K562 (cell line): ENCODE measurements at regions of chr18 and their contacts with region 1.

Region 1: DNA sequence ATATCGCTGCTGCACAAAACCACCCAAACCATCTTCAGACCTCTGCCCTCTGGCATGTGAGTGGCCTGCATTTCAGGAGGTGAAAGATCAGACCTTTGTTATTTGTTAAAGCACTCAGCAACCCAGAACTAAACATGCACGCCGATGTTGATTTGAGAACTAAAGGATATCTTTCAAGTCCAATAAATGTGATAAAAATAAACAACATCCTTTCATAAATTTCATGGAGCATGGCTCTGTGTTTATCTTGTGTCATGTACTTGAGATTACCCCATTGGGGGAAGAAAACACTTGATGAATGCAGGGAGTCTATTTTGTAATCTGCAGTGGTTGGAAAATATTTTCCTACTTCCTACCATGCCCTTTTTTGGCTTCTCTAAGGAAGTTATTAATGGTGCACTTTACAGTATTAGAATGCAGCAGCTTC is 70.8 kb upstream of the GATA6 start:
- DNase-seq: no peak
- ATAC-seq: no peak
- H3K4me3 ChIP-seq: no peak overlapping the region
- H3K27ac ChIP-seq: no peak overlapping the region
- H3K4me1 ChIP-seq: peaks cover 7 to 27% of the 10 kb centered on the region in 2 experiments; a peak in 4 of 5 replicates
- H3K27me3 ChIP-seq: peaks cover 2 to 16% of the 10 kb centered on the region in 2 experiments; a peak in 3 of 5 replicates
- CTCF ChIP-seq: no peak
- EP300 ChIP-seq: no peak
- POLR2A ChIP-seq: no peak
- RAD21 ChIP-seq: no peak

Region 2: GRCh38 chr18:22018366-22018765 is 80.2 kb before region 1 on chr18:
- CTCF ChIA-PET with region 1: no interaction called
- POLR2A ChIA-PET with region 1: no interaction called
- in situ Hi-C with region 1: no loop called
- intact Hi-C with region 1: loop called (anchors 10 kb)
- DNase-seq: no peak
- ATAC-seq: no peak
- H3K4me3 ChIP-seq: no peak overlapping the region
- H3K27ac ChIP-seq: no peak overlapping the region
- H3K4me1 ChIP-seq: no peaks in the 10 kb centered on the region
- H3K27me3 ChIP-seq: peaks cover 12 to 17% of the 10 kb centered on the region in 2 experiments; a peak in 3 of 5 replicates
- CTCF ChIP-seq: no peak
- EP300 ChIP-seq: no peak
- POLR2A ChIP-seq: no peak
- RAD21 ChIP-seq: no peak

Region 3: GRCh38 chr18:22084547-22084946 is 14.0 kb before region 1 on chr18:
- CTCF ChIA-PET with region 1: no interaction called
- POLR2A ChIA-PET with region 1: interaction called, 12 read pairs
- in situ Hi-C with region 1: no loop called
- intact Hi-C with region 1: no loop called
- DNase-seq: no peak
- ATAC-seq: no peak
- H3K4me3 ChIP-seq: no peak overlapping the region
- H3K27ac ChIP-seq: no peak overlapping the region
- H3K4me1 ChIP-seq: no peaks in the 10 kb centered on the region; a peak in 1 of 5 replicates
- H3K27me3 ChIP-seq: peaks cover 49 to 69% of the 10 kb centered on the region in 2 experiments
- CTCF ChIP-seq: no peak
- EP300 ChIP-seq: no peak
- POLR2A ChIP-seq: no peak
- RAD21 ChIP-seq: no peak